IMR-90 (cell line): ENCODE measurements at regions of chr4 and their contacts with region 1.

Region 1: GRCh38 chr4:137664046-137664387 is 131.7 kb upstream of the PCDH18 start:
- DNase-seq: peak; percentile 85
- ATAC-seq: peak; percentile 76
- H3K4me3 ChIP-seq: no peak overlapping the region; the same call in 1 of the 2 replicates
- H3K27ac ChIP-seq: peak overlapping the region; percentile 98; the same call in 1 of the 2 replicates
- H3K4me1 ChIP-seq: peaks cover 18% of the 10 kb centered on the region
- H3K27me3 ChIP-seq: no peaks in the 10 kb centered on the region
- CTCF ChIP-seq: no peak
- POLR2A ChIP-seq: no peak
- RAD21 ChIP-seq: no peak

Region 2: GRCh38 chr4:137470806-137471205 is 193.2 kb before region 1 on chr4:
- CTCF ChIA-PET with region 1: no interaction called
- POLR2A ChIA-PET with region 1: no interaction called
- dilution Hi-C with region 1: no loop called
- in situ Hi-C with region 1: no loop called
- intact Hi-C with region 1: no loop called
- DNase-seq: no peak
- ATAC-seq: no peak
- H3K4me3 ChIP-seq: no peak overlapping the region
- H3K27ac ChIP-seq: no peak overlapping the region
- H3K4me1 ChIP-seq: no peaks in the 10 kb centered on the region
- H3K27me3 ChIP-seq: no peaks in the 10 kb centered on the region
- CTCF ChIP-seq: no peak
- POLR2A ChIP-seq: no peak
- RAD21 ChIP-seq: no peak

Region 3: DNA sequence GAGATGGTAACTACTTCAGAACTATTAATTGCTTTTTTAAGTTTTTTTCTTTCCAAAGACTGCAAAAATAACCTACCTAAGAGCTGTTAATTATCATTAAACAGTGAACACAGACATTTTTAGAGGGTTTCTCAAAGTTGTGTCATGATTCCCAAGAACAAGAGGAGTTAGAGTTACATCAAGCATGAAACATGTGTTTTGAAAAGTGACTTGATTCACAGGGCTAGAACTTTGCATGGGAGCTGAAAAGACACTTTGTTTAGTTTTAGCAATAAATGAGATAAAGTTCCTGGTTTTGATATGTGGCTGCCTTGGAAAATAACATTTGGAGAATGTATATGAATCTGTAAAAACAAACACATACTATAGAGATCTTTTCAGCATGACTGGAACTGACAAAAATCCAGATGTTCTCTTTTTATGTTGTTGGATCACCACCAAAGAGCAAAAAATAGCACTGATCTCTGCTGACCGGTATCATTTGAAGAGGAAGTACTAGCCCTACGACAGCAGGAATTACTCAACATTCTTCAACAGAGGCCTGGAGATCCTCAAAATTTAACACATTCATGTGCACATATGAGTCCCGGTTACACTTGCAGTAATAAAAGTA is 41.3 kb after region 1 on chr4:
- CTCF ChIA-PET with region 1: no interaction called
- POLR2A ChIA-PET with region 1: interaction called, 7 read pairs
- dilution Hi-C with region 1: no loop called
- in situ Hi-C with region 1: no loop called
- intact Hi-C with region 1: loop called (anchors 1 kb)
- DNase-seq: peak; percentile 97
- ATAC-seq: peak; percentile 90
- H3K4me3 ChIP-seq: no peak overlapping the region
- H3K27ac ChIP-seq: peak overlapping the region; percentile 93; the same call in 1 of the 2 replicates
- H3K4me1 ChIP-seq: peaks cover 15% of the 10 kb centered on the region
- H3K27me3 ChIP-seq: no peaks in the 10 kb centered on the region
- CTCF ChIP-seq: no peak
- POLR2A ChIP-seq: no peak
- RAD21 ChIP-seq: no peak

Region 4: GRCh38 chr4:138182838-138183426 is 518.9 kb after region 1 on chr4:
- CTCF ChIA-PET with region 1: no interaction called
- POLR2A ChIA-PET with region 1: no interaction called
- dilution Hi-C with region 1: no loop called
- in situ Hi-C with region 1: no loop called
- intact Hi-C with region 1: loop called (anchors 5 kb)
- DNase-seq: peak; percentile 72
- ATAC-seq: peak; percentile 31; the same call in 1 of the 2 replicates
- H3K4me3 ChIP-seq: no peak overlapping the region
- H3K27ac ChIP-seq: no peak overlapping the region
- H3K4me1 ChIP-seq: peaks cover 4% of the 10 kb centered on the region; the same call in 1 of the 2 replicates
- H3K27me3 ChIP-seq: no peaks in the 10 kb centered on the region
- CTCF ChIP-seq: peak; percentile 76
- POLR2A ChIP-seq: no peak
- RAD21 ChIP-seq: peak; percentile 76